ENCODE measurements at regions of chr17 and their contacts with region 1.

Region 1: GRCh38 chr17:44199553-44200477 is at the start of gene ATXN7L3:
- DNase-seq: peak; percentile 100
- ATAC-seq: peak; percentile 80
- H3K4me3 Mint-ChIP-seq: peak within 1 kb of the TSS; percentile 89
- H3K27ac Mint-ChIP-seq: peak within 1 kb of the TSS; percentile 94
- H3K4me1 Mint-ChIP-seq: peaks cover 40% of the 10 kb centered on the region
- H3K27me3 Mint-ChIP-seq: no peaks in the 10 kb centered on the region
- total RNA-seq, gene ATXN7L3: 106 to 122 TPM

Region 2: GRCh38 chr17:44186307-44187130 is 13.3 kb before region 1 on chr17 and contains the start of gene TMUB2:
- CTCF ChIA-PET with region 1: interaction called, 32 read pairs
- DNase-seq: peak; percentile 99
- ATAC-seq: peak; percentile 91
- H3K4me3 Mint-ChIP-seq: peak within 1 kb of the TSS; percentile 98
- H3K27ac Mint-ChIP-seq: peak within 1 kb of the TSS; percentile 98
- H3K4me1 Mint-ChIP-seq: peaks cover 42% of the 10 kb centered on the region
- H3K27me3 Mint-ChIP-seq: no peaks in the 10 kb centered on the region
- total RNA-seq, gene TMUB2: 31.4 to 34.1 TPM

Region 3: GRCh38 chr17:44218344-44219107 is 18.7 kb after region 1 on chr17:
- CTCF ChIA-PET with region 1: interaction called, 40 read pairs
- DNase-seq: peak; percentile 90
- ATAC-seq: peak; percentile 63
- H3K4me3 Mint-ChIP-seq: peak overlapping the region; percentile 88
- H3K27ac Mint-ChIP-seq: peak overlapping the region; percentile 91
- H3K4me1 Mint-ChIP-seq: peaks cover 37% of the 10 kb centered on the region
- H3K27me3 Mint-ChIP-seq: no peaks in the 10 kb centered on the region

Region 4: DNA sequence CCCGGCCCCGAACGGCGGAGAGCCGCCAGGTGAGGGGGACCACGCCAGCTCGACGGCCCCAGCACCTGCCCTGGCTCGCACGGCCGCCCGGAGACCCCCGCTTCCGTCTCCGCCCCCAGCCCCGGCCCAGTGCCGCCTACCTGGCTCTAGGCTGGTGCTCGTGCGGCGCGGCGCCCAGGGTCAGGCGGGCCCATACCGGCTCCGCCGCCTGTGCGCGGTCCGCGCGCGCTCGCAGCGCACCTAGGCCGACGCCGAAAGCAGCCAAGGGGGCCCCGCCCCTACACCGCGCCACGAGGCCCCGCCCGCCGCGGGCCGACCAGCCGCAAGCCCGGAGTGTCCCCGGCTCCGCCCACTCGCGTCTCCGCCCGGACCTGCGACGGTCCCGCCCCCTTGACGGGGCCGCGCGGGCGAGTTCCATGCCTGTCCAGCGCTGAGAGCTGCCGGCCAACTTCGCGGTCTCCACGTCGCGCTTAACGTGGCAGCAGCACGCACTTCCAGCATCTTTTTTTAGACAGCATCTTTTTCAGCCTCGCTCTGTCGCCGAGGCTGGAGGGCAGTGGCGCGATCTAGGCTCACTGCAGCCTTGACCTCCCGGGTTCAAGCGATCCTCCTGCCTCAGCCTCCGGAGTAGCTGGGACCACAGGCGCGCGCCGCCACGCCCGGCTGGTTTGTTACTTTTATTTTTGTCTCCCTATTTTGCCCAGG is 124.9 kb after region 1 on chr17 and contains the start of gene SLC25A39:
- CTCF ChIA-PET with region 1: interaction called, 11 read pairs
- DNase-seq: peak; percentile 95
- ATAC-seq: peak; percentile 82
- H3K4me3 Mint-ChIP-seq: peak within 1 kb of the TSS; percentile 85
- H3K27ac Mint-ChIP-seq: peak within 1 kb of the TSS; percentile 97
- H3K4me1 Mint-ChIP-seq: peaks cover 26% of the 10 kb centered on the region
- H3K27me3 Mint-ChIP-seq: no peaks in the 10 kb centered on the region
- total RNA-seq, gene SLC25A39: 103 to 133 TPM

Region 5: GRCh38 chr17:44331249-44331760 is 131.5 kb after region 1 on chr17:
- CTCF ChIA-PET with region 1: interaction called, 12 read pairs
- DNase-seq: peak; percentile 86
- ATAC-seq: peak; percentile 46
- H3K4me3 Mint-ChIP-seq: no peak overlapping the region
- H3K27ac Mint-ChIP-seq: no peak overlapping the region
- H3K4me1 Mint-ChIP-seq: peaks cover 13% of the 10 kb centered on the region
- H3K27me3 Mint-ChIP-seq: no peaks in the 10 kb centered on the region

Region 6: GRCh38 chr17:44344939-44345453 is 145.2 kb after region 1 on chr17 and contains the start of gene GRN:
- CTCF ChIA-PET with region 1: interaction called, 11 read pairs
- DNase-seq: peak; percentile 92
- ATAC-seq: peak; percentile 99
- H3K4me3 Mint-ChIP-seq: peak within 1 kb of the TSS; percentile 82
- H3K27ac Mint-ChIP-seq: peak within 1 kb of the TSS; percentile 9
- H3K4me1 Mint-ChIP-seq: peaks cover 31% of the 10 kb centered on the region
- H3K27me3 Mint-ChIP-seq: peaks cover 11% of the 10 kb centered on the region
- total RNA-seq, gene GRN: 56.5 to 69.2 TPM

Region 7: DNA sequence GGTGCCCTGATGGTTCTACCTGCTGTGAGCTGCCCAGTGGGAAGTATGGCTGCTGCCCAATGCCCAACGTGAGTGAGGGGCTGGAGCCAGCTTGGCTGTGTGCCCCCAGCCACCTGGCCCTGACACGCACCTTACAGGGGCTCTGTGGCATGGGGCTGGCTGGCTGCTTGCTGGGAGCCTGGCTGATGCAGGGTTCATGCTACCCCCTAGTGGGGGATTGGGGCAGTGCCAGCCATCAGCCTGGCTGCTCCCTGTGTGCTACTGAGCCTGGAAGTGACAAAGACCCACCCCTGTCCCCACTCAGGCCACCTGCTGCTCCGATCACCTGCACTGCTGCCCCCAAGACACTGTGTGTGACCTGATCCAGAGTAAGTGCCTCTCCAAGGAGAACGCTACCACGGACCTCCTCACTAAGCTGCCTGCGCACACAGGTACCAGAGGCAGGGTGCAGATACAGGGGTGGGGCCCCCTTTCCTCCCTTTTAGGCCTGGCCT is 151.0 kb after region 1 on chr17:
- CTCF ChIA-PET with region 1: interaction called, 11 read pairs
- DNase-seq: peak; percentile 81
- ATAC-seq: peak; percentile 79
- H3K4me3 Mint-ChIP-seq: no peak overlapping the region
- H3K27ac Mint-ChIP-seq: no peak overlapping the region
- H3K4me1 Mint-ChIP-seq: peaks cover 25% of the 10 kb centered on the region
- H3K27me3 Mint-ChIP-seq: peaks cover 12% of the 10 kb centered on the region

Measured in activated CD8-positive, alpha-beta memory T cell treated with anti-CD3 and anti-CD28 coated beads, Interleukin-2, amount 10 ng/mL, durations not matched to agents 7 days and 5 days (primary cell).